ENCODE measurements at regions of chr10 and their contacts with region 1.

Region 1: DNA sequence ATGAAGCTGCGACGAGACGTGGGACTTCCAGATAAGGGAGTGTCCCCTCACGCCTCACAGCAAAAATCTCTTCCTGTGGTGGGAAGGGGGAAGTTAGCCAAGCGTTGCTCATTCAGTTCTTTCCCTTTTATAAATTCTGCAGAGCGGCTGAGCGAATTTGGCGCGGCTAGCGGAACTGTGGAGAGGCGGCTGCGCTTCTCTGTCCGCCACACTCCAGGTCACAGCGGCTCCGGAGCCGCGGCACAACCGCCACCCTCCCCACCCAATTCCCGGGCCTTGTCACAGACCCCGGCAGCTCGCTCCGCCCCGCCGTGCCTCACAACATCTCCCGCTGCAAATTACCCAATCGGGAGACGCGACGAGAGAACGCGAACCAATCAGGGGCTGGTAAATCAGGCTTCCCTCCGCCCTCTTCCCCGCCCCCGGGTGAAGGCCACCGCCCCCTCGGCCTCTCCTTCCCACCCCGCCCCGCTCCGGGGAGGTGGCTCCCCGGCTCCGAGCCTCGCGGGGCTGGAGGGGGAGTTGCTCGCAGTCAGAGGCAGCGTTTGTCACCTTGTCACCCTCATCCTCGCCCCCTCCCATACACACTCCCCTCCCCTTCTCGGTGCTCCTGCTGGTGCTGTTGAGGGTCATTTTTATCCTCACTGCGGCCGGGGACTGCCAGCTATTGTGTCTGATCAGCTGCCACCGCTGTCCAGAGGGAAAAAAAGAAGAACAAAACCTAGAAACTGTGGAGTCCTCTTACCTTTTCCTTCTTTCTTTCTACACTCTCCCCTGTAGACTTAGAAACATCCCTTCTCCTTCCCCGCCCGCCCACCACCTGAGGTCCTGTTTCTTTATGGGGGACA is 918 bp upstream of the ARHGAP21 start:
- DNase-seq: peak; percentile 97
- H3K4me3 Mint-ChIP-seq: peak overlapping the region; percentile 88
- H3K27ac Mint-ChIP-seq: peak overlapping the region; percentile 93
- H3K4me1 Mint-ChIP-seq: peaks cover 19% of the 10 kb centered on the region
- H3K27me3 Mint-ChIP-seq: no peaks in the 10 kb centered on the region

Region 2: DNA sequence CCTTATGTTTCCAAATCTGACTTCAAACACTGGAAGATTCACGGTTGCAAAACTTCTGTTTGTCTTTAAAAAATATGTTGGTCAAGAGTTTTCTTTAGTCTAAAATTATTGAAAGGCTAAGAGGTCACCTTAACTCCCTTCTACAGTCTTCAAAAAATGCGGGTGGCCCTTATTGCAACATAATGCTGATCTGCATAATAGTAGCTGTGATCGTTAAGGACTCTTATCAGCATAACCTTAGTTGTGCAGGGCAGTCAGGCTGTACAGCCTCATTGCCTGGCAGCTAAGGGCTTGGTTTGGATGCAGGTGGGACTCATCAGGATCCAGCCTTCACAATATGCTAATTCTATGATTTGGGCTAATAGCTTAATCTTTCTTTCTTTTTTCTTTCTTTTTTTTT is 500.7 kb before region 1 on chr10:
- CTCF ChIA-PET with region 1: no interaction called
- POLR2A ChIA-PET with region 1: no interaction called
- intact Hi-C with region 1: no loop called
- DNase-seq: no peak
- H3K4me3 Mint-ChIP-seq: no peak overlapping the region
- H3K27ac Mint-ChIP-seq: no peak overlapping the region
- H3K4me1 Mint-ChIP-seq: no peaks in the 10 kb centered on the region
- H3K27me3 Mint-ChIP-seq: peaks cover 2% of the 10 kb centered on the region

Region 3: GRCh38 chr10:24579906-24580305 is 144.7 kb before region 1 on chr10:
- CTCF ChIA-PET with region 1: no interaction called
- POLR2A ChIA-PET with region 1: no interaction called
- intact Hi-C with region 1: no loop called
- DNase-seq: no peak
- H3K4me3 Mint-ChIP-seq: no peak overlapping the region
- H3K27ac Mint-ChIP-seq: no peak overlapping the region
- H3K4me1 Mint-ChIP-seq: no peaks in the 10 kb centered on the region
- H3K27me3 Mint-ChIP-seq: peaks cover 4% of the 10 kb centered on the region

Region 4: GRCh38 chr10:24642622-24643417 is 81.8 kb before region 1 on chr10:
- CTCF ChIA-PET with region 1: interaction called, 6 read pairs
- POLR2A ChIA-PET with region 1: no interaction called
- intact Hi-C with region 1: loop called (anchors 1 kb)
- DNase-seq: no peak
- H3K4me3 Mint-ChIP-seq: no peak overlapping the region
- H3K27ac Mint-ChIP-seq: no peak overlapping the region
- H3K4me1 Mint-ChIP-seq: no peaks in the 10 kb centered on the region
- H3K27me3 Mint-ChIP-seq: no peaks in the 10 kb centered on the region

Region 5: GRCh38 chr10:24674892-24675632 is 49.5 kb before region 1 on chr10:
- CTCF ChIA-PET with region 1: no interaction called
- POLR2A ChIA-PET with region 1: interaction called, 3 read pairs
- intact Hi-C with region 1: loop called (anchors 2 kb)
- DNase-seq: no peak
- H3K4me3 Mint-ChIP-seq: no peak overlapping the region
- H3K27ac Mint-ChIP-seq: no peak overlapping the region
- H3K4me1 Mint-ChIP-seq: peaks cover 13% of the 10 kb centered on the region
- H3K27me3 Mint-ChIP-seq: no peaks in the 10 kb centered on the region

Region 6: DNA sequence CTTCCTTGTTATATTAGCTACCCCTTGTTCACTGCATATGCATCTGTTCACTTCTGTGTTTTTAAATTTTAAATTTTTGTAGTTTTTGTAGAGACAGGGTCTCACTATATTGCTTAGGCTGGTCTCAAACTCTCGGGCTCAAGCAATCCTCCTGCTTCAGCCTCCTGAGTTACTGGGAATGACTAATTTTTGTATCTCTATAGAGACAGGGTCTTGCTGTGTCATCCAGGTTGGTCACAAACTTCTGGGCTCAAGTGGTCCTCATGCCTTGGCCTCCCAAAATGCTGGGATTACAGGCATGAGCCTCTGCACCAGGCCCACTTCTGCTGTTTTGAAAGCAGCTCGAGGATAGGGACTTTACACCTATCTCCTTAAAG is 163.2 kb after region 1 on chr10:
- CTCF ChIA-PET with region 1: no interaction called
- POLR2A ChIA-PET with region 1: interaction called, 3 read pairs
- intact Hi-C with region 1: loop called (anchors 5 kb)
- DNase-seq: no peak
- H3K4me3 Mint-ChIP-seq: no peak overlapping the region
- H3K27ac Mint-ChIP-seq: peak overlapping the region; percentile 76
- H3K4me1 Mint-ChIP-seq: peaks cover 35% of the 10 kb centered on the region
- H3K27me3 Mint-ChIP-seq: no peaks in the 10 kb centered on the region

Region 7: GRCh38 chr10:24952707-24953645 is 228.4 kb after region 1 on chr10:
- CTCF ChIA-PET with region 1: interaction called, 3 read pairs
- POLR2A ChIA-PET with region 1: no interaction called
- intact Hi-C with region 1: loop called (anchors 1 kb)
- DNase-seq: peak; percentile 48
- H3K4me3 Mint-ChIP-seq: peak overlapping the region; percentile 66
- H3K27ac Mint-ChIP-seq: no peak overlapping the region
- H3K4me1 Mint-ChIP-seq: peaks cover 21% of the 10 kb centered on the region
- H3K27me3 Mint-ChIP-seq: peaks cover 4% of the 10 kb centered on the region

Region 8: DNA sequence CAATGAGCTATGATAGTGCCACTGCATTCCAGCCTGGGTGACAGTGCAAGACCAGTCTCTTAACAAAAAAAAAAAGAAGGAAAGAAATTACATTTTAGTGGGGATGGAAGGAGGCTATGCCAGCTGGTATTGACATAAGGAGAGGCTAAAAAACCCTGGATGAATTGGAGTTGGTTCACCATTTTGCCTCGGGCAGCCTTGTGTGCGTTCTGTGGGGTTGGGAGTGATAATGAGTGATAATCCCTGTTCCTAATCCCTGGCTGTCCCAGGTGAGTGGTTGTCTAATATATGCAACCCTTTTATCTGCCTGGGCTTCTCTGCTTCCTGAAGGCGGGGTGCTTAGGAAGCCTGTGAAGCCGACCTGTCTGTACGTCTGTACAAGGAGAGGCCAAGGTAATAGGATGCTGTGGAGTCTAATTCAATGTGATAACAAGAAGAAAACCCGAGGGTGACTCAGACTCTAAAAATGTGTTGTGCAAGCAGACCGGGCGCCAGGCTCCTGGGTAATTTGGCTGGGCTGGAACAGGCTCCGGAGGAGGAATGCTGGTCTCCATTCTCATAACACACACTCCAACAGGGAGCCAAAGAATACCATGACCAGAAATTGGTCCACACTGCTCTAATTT is 335.3 kb after region 1 on chr10:
- CTCF ChIA-PET with region 1: no interaction called
- POLR2A ChIA-PET with region 1: no interaction called
- intact Hi-C with region 1: loop called (anchors 10 kb)
- DNase-seq: no peak
- H3K4me3 Mint-ChIP-seq: no peak overlapping the region
- H3K27ac Mint-ChIP-seq: no peak overlapping the region
- H3K4me1 Mint-ChIP-seq: peaks cover 20% of the 10 kb centered on the region
- H3K27me3 Mint-ChIP-seq: no peaks in the 10 kb centered on the region